ENCODE measurements at regions of chr3 and their contacts with region 1.

Region 1: DNA sequence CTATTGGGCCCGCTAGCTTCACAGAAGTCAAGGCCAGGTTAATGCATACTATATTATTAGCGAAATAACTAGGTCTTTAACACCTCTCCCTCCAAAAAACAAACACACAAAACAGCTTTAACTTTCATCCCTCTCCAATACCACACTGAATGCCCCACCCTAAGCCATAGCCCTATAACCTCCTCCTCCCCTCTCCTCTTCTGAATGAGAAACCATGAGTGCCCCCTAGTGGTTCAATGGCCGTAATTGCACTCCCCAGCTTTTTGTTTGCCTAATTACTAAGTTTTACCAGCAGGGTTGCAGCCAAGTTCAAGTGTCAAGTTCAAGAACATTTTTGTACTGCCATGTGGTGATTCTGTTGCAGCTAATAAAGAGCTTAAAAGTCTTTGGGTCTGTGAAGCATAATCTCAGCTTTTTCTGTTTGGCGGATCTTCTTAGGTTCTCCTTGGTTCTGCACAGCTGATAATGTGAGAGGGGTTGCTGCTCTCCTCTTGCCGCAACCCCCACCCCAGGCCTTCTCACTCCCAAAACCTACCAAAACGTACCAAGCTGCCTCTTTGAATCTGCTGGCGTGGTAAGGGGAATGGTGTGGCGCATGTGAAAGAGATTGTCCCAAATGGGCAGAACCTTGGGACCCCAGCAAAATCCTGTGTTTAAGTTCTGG is 57.9 kb downstream of the RPL22L1 start:
- H3K4me3 ChIP-seq: no peak overlapping the region
- H3K27ac ChIP-seq: no peak overlapping the region
- H3K4me1 ChIP-seq: no peaks in the 10 kb centered on the region
- CTCF ChIP-seq: peak; percentile 70

Region 2: GRCh38 chr3:170848292-170848917 is 36.3 kb after region 1 on chr3:
- CTCF ChIA-PET with region 1: interaction called, 28 read pairs
- POLR2A ChIA-PET with region 1: no interaction called
- H3K4me3 ChIP-seq: no peak overlapping the region
- H3K27ac ChIP-seq: no peak overlapping the region
- H3K4me1 ChIP-seq: no peaks in the 10 kb centered on the region
- CTCF ChIP-seq: no peak